Vagina (tissue), 2 donors: ENCODE measurements at regions of chr16 and their contacts with region 1.

Region 1: GRCh38 chr16:56519459-56520250 is at the start of gene BBS2:
- DNase-seq: peak in 1 of 2 donors; percentile 90
- H3K4me3 ChIP-seq: peak within 1 kb of the TSS; percentile 79 to 86
- H3K27ac ChIP-seq: peak within 1 kb of the TSS; percentile 91
- H3K4me1 ChIP-seq: peaks cover 54% of the 10 kb centered on the region
- H3K27me3 ChIP-seq: no peaks in the 10 kb centered on the region
- CTCF ChIP-seq: peak in 2 of 3 experiments; percentile 3 to 16
- POLR2A ChIP-seq: peak in 1 of 2 donors; percentile 68
- total RNA-seq, gene BBS2: 89.9 TPM

Region 2: DNA sequence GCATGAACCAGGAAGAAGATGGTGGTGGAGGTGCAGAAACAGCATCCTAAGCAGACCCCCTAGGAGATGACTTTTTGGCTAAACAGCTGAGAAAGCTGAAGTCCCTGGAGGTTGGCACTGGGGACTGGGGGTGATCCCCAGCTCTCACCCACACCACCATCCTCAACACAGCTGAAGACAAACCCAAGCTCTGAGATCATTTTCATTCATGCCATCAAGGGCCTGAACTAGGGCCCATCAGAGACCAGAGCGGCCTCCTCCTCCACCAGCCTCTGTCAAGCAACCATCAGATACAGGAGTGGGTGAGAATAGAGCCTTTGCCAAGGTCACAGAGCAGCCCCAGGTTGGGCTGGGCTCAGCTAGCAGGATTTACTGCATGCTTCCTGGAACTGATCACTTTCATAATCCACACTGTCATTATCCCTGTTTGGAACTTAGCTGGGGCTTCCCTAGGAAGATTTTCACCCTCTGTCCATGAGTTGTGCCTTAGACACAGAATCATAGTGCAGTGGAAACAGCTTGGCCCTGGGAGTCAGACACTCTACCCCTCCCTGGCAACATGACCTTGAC is 50.2 kb after region 1 on chr16:
- intact Hi-C with region 1: no loop called
- DNase-seq: no peak
- H3K4me3 ChIP-seq: no peak overlapping the region
- H3K27ac ChIP-seq: no peak overlapping the region
- H3K4me1 ChIP-seq: no peaks in the 10 kb centered on the region
- H3K27me3 ChIP-seq: no peaks in the 10 kb centered on the region
- CTCF ChIP-seq: no peak
- POLR2A ChIP-seq: no peak

Region 3: GRCh38 chr16:56708525-56709442 is 189.1 kb after region 1 on chr16:
- intact Hi-C with region 1: loop called (anchors 10 kb)
- DNase-seq: peak in 1 of 2 donors; percentile 52
- H3K4me3 ChIP-seq: peak overlapping the region in 1 of 2 donors; percentile 13
- H3K27ac ChIP-seq: no peak overlapping the region
- H3K4me1 ChIP-seq: no peaks in the 10 kb centered on the region
- H3K27me3 ChIP-seq: no peaks in the 10 kb centered on the region
- CTCF ChIP-seq: no peak
- POLR2A ChIP-seq: no peak